GM12878 (cell line): ENCODE measurements at regions of chr20 and their contacts with region 1.

Region 1: GRCh38 chr20:63009045-63009961 is 2.5 kb upstream of the BHLHE23 start:
- DNase-seq: peak; percentile 60
- ATAC-seq: peak; percentile 73
- H3K4me3 ChIP-seq: peak overlapping the region; percentile 78
- H3K27ac ChIP-seq: peak overlapping the region; percentile 97
- H3K4me1 ChIP-seq: peaks cover 24% of the 10 kb centered on the region
- H3K27me3 ChIP-seq: peaks cover 12 to 14% of the 10 kb centered on the region in 2 experiments
- CTCF ChIP-seq: peak; percentile 82 to 99 (median 95); a peak in 5 of 6 replicates
- EP300 ChIP-seq: peak in 1 of 2 experiments; percentile 36; a peak in 1 of 4 replicates
- POLR2A ChIP-seq: peak; percentile 75
- RAD21 ChIP-seq: peak; percentile 96

Region 2: DNA sequence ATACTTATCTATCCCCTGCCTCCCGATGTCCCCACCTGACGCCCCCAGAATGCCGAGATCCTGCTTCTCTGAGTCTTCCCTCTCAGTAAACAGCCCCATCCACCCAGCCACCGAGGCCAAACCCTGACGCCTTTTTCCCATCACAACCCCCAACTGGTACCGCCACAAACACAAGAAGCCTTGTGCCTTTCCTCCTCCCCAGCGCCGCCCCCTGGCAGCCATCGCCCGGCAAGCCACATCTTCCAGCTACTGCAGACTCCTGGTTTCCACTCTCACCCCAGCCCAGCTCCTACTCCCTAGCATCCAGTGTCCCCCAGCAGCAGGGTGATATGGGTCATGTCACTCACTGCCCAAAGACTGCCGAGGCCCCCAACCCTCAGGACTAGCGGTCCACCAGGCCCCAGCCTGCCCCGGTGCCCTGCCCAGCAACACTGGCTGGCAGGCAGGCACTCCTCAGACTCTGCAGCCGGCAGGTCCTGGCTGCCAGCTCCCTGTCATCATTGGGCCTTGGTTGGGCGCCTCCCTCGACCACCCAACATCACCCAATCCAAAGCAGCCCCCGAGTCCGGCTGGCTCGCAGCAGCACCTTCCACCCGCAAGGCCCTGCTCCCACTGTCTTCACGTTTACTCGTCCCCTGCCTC is 158.8 kb before region 1 on chr20:
- CTCF ChIA-PET with region 1: no interaction called
- POLR2A ChIA-PET with region 1: no interaction called
- RAD21 ChIA-PET with region 1: no interaction called
- SMC1A ChIA-PET with region 1: no interaction called
- in situ Hi-C with region 1: no loop called
- intact Hi-C with region 1: no loop called
- DNase-seq: no peak
- ATAC-seq: no peak
- H3K4me3 ChIP-seq: no peak overlapping the region
- H3K27ac ChIP-seq: no peak overlapping the region
- H3K4me1 ChIP-seq: no peaks in the 10 kb centered on the region
- H3K27me3 ChIP-seq: no peaks in the 10 kb centered on the region
- CTCF ChIP-seq: no peak
- EP300 ChIP-seq: no peak
- POLR2A ChIP-seq: no peak
- RAD21 ChIP-seq: no peak

Region 3: GRCh38 chr20:62900052-62900691 is 109.1 kb before region 1 on chr20:
- CTCF ChIA-PET with region 1: interaction called, 18 read pairs
- POLR2A ChIA-PET with region 1: interaction called, 5 read pairs
- RAD21 ChIA-PET with region 1: interaction called, 21 read pairs
- SMC1A ChIA-PET with region 1: interaction called, 4 read pairs
- in situ Hi-C with region 1: no loop called
- intact Hi-C with region 1: loop called (anchors 2 kb)
- DNase-seq: no peak
- ATAC-seq: peak; percentile 97
- H3K4me3 ChIP-seq: no peak overlapping the region
- H3K27ac ChIP-seq: peak overlapping the region; percentile 30
- H3K4me1 ChIP-seq: peaks cover 25% of the 10 kb centered on the region
- H3K27me3 ChIP-seq: no peaks in the 10 kb centered on the region
- CTCF ChIP-seq: peak; percentile 94 to 98 (median 96)
- EP300 ChIP-seq: no peak
- POLR2A ChIP-seq: peak; percentile 74
- RAD21 ChIP-seq: peak; percentile 74

Region 4: DNA sequence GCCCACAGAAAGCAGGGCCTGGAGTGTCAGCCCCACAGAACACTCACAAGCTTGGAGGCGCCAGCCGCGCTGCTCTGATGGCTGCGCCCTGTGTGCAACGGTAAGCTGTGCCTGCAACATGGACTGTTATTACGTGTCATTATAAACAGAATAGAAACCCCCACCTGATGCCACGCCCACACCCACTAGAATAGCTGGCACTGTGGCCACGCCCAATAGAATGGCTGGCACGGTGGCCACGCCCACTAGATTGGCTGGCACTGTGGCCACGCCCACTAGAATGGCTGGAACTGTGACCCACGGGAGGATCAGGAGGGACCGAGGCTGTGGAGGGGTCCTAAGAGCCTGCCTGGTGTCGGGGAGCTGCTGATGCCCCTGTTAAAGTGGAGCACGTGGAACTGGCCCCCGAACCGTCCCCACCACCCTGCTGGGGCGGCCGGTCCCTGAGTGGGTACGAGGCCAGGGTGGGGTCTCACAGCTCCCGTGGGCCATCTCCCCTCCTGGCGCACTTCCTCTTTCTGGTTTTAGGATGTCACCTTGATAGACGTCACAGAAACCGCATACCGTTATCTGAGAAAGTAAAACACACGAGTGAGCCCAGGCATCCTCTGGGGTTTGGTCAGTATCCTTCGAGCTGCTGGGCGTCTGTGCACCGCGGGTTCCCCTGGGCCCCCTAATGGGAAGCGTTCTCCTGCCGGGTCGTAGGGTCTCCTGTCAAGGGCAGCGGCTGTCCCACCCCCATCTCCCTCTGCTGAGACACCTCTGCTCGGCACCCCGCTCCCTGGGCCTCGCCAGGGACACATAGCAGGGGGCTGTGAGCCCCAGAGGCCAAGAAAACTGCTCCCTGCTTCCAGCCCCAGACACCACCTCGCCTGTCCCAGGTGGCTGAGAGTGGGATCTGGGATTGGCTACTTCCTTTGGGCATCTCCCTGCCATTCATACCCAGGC is 31.4 kb before region 1 on chr20:
- CTCF ChIA-PET with region 1: interaction called, 28 read pairs
- POLR2A ChIA-PET with region 1: interaction called, 37 read pairs
- RAD21 ChIA-PET with region 1: interaction called, 3 read pairs
- SMC1A ChIA-PET with region 1: interaction called, 15 read pairs
- in situ Hi-C with region 1: loop called (anchors 5 kb)
- intact Hi-C with region 1: loop called (anchors 1 kb)
- DNase-seq: peak; percentile 71
- ATAC-seq: peak; percentile 81
- H3K4me3 ChIP-seq: peak overlapping the region; percentile 49; the same call in 1 of the 2 replicates
- H3K27ac ChIP-seq: peak overlapping the region; percentile 41
- H3K4me1 ChIP-seq: peaks cover 30% of the 10 kb centered on the region
- H3K27me3 ChIP-seq: peaks cover 0 to 16% of the 10 kb centered on the region in 2 experiments; a peak in 2 of 4 replicates
- CTCF ChIP-seq: no peak
- EP300 ChIP-seq: peak; percentile 94 to 98; a peak in 3 of 4 replicates
- POLR2A ChIP-seq: peak; percentile 71
- RAD21 ChIP-seq: no peak

Region 5: GRCh38 chr20:63042448-63043071 is 33.3 kb after region 1 on chr20:
- CTCF ChIA-PET with region 1: interaction called, 5 read pairs
- POLR2A ChIA-PET with region 1: interaction called, 8 read pairs
- RAD21 ChIA-PET with region 1: interaction called, 19 read pairs
- SMC1A ChIA-PET with region 1: interaction called, 7 read pairs
- in situ Hi-C with region 1: no loop called
- intact Hi-C with region 1: no loop called
- DNase-seq: peak; percentile 63
- ATAC-seq: peak; percentile 83
- H3K4me3 ChIP-seq: no peak overlapping the region
- H3K27ac ChIP-seq: no peak overlapping the region
- H3K4me1 ChIP-seq: peaks cover 6% of the 10 kb centered on the region
- H3K27me3 ChIP-seq: no peaks in the 10 kb centered on the region
- CTCF ChIP-seq: peak in 2 of 3 experiments; percentile 3 to 21; a peak in 1 of 6 replicates
- EP300 ChIP-seq: peak; percentile 78 to 90
- POLR2A ChIP-seq: no peak
- RAD21 ChIP-seq: no peak